ENCODE measurements at regions of chr9 and their contacts with region 1.

Region 1: DNA sequence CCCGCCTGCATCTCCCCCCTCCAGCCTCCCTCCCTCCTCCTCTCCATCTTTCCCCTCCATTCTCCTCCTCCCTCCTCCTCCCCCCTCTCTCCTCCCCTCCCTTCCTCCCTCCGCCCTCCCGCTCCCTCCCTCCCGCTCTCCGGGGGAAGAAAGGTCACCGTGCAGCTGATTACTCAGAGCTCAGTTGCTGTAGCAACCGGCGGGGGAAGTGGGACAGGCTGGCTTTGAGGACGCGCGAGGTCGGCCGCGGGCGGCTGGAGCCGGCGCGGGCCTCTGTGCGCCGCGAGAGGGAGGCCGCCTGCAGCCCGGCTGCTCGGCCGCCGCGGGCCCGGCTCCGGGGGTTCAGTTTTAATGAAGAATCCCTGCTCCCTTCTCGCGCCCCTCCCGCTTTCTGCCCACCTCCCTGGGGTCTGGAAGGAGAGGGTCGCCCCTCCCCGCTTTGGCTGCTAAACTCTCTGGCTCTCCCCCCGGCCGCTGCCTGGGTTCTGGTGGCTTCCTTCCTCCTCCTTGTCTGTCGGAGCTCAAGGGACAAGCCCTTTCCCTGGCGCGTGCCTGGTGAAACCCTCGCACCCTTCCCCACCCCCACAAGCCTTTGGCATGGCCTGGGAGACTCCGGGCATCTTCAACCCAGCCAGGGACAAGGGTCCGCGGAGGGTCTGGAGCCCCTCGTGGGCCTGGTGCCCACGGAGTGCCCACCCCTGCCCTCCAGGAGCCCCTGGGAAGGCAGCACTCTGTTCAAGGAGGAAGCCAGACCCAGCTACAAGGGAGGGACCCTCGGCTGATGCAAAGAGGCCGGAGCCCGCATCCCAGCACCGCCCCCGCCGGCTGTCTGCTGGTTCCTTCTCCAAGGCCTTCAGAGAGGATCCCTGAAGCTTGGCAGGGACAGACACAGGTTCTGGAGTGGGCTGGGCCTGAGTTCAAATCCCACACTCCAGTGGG is 160.3 kb downstream of the C9orf50 start:
- DNase-seq: peak; percentile 95 to 97 (median 96)
- H3K4me3 ChIP-seq: peak overlapping the region; percentile 13 to 61 (median 44)
- H3K4me3 Mint-ChIP-seq: peak overlapping the region; percentile 78 to 88
- H3K27ac ChIP-seq: peak overlapping the region; percentile 97 to 100
- H3K27ac Mint-ChIP-seq: peak overlapping the region; percentile 97 to 99 (median 99)
- H3K4me1 ChIP-seq: peaks cover 44 to 47% of the 10 kb centered on the region in 2 donors
- H3K4me1 Mint-ChIP-seq: peaks cover 40% of the 10 kb centered on the region
- H3K27me3 ChIP-seq: no peaks in the 10 kb centered on the region
- H3K27me3 Mint-ChIP-seq: peaks cover 5 to 9% (median 6%) of the 10 kb centered on the region in 3 donors
- CTCF ChIP-seq: no peak

Region 2: DNA sequence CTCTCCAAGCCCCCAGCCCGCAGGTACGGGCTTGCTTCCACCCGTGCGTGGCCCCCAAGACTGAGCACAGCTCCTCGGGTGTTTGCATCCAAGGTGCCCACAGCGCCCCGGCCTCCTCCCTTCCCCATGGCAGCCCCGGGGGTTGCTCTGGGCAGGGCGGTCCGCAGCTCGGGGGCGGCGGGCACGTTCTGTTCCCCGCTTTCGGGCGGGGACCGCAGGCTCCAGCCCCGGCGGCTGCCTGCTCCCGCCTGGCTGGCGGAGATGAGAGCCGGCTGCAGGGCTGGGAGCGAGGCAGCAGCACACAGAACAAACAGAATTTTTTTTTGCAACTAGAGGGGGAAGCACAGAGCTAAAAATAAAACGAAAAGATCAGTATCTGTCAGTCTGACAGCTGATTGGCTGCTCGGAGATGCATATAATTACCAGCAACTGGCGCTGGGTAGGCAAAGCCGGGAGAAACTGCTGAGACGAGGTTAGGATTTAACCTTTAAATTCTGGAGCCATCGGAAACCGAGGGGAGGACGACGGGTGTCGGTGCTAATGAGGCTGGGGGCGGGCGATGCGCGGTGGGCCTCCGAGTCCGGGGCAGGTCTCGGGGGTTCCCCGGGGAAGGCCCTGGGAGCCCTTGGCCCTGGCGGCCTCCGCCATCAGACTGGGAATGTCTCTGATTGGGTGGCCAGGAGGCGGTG is 139.9 kb before region 1 on chr9:
- intact Hi-C with region 1: loop called in 1 of 2 experiments (anchors 10 kb)
- DNase-seq: peak; percentile 77 to 90 (median 79)
- H3K4me3 ChIP-seq: peak overlapping the region; percentile 54 to 82 (median 55)
- H3K4me3 Mint-ChIP-seq: peak overlapping the region; percentile 86 to 96
- H3K27ac ChIP-seq: peak overlapping the region; percentile 49 to 94
- H3K27ac Mint-ChIP-seq: peak overlapping the region; percentile 90 to 99 (median 95)
- H3K4me1 ChIP-seq: peaks cover 34 to 52% of the 10 kb centered on the region in 2 donors
- H3K4me1 Mint-ChIP-seq: peaks cover 56% of the 10 kb centered on the region
- H3K27me3 ChIP-seq: no peaks in the 10 kb centered on the region
- H3K27me3 Mint-ChIP-seq: peaks cover 0 to 3% (median 1%) of the 10 kb centered on the region in 3 donors
- CTCF ChIP-seq: peak; percentile 43

Region 3: GRCh38 chr9:129413537-129414376 is 46.8 kb before region 1 on chr9:
- intact Hi-C with region 1: loop called in 1 of 2 experiments (anchors 2 kb)
- DNase-seq: peak; percentile 98
- H3K4me3 ChIP-seq: peak overlapping the region; percentile 31 to 68 (median 49)
- H3K4me3 Mint-ChIP-seq: peak overlapping the region; percentile 74 to 87
- H3K27ac ChIP-seq: peak overlapping the region; percentile 98
- H3K27ac Mint-ChIP-seq: peak overlapping the region; percentile 97 to 99 (median 98)
- H3K4me1 ChIP-seq: peaks cover 48 to 49% of the 10 kb centered on the region in 2 donors
- H3K4me1 Mint-ChIP-seq: peaks cover 38% of the 10 kb centered on the region
- H3K27me3 ChIP-seq: no peaks in the 10 kb centered on the region
- H3K27me3 Mint-ChIP-seq: peaks cover 1 to 2% (median 2%) of the 10 kb centered on the region in 3 donors
- CTCF ChIP-seq: no peak

Region 4: GRCh38 chr9:129422843-129423192 is 37.8 kb before region 1 on chr9:
- intact Hi-C with region 1: loop called in 1 of 2 experiments (anchors 5 kb)
- DNase-seq: peak; percentile 44 to 59 (median 54)
- H3K4me3 ChIP-seq: peak overlapping the region in 1 of 3 experiments; percentile 14
- H3K4me3 Mint-ChIP-seq: no peak overlapping the region
- H3K27ac ChIP-seq: no peak overlapping the region
- H3K27ac Mint-ChIP-seq: peak overlapping the region in 1 of 7 donors; percentile 90
- H3K4me1 ChIP-seq: peaks cover 12% of the 10 kb centered on the region in 2 donors
- H3K4me1 Mint-ChIP-seq: peaks cover 16% of the 10 kb centered on the region
- H3K27me3 ChIP-seq: no peaks in the 10 kb centered on the region
- H3K27me3 Mint-ChIP-seq: peaks cover 1 to 9% (median 4%) of the 10 kb centered on the region in 3 donors
- CTCF ChIP-seq: no peak

Region 5: GRCh38 chr9:129482521-129483414 is 22.2 kb after region 1 on chr9:
- intact Hi-C with region 1: loop called in 1 of 2 experiments (anchors 1 kb)
- DNase-seq: peak; percentile 48 to 55 (median 52)
- H3K4me3 ChIP-seq: peak overlapping the region; percentile 34 to 70 (median 38)
- H3K4me3 Mint-ChIP-seq: peak overlapping the region; percentile 75 to 85
- H3K27ac ChIP-seq: peak overlapping the region; percentile 89 to 92
- H3K27ac Mint-ChIP-seq: peak overlapping the region; percentile 84 to 95 (median 92)
- H3K4me1 ChIP-seq: peaks cover 26 to 38% of the 10 kb centered on the region in 2 donors
- H3K4me1 Mint-ChIP-seq: peaks cover 30% of the 10 kb centered on the region
- H3K27me3 ChIP-seq: no peaks in the 10 kb centered on the region
- H3K27me3 Mint-ChIP-seq: peaks cover 6 to 17% (median 9%) of the 10 kb centered on the region in 3 donors
- CTCF ChIP-seq: no peak

Region 6: GRCh38 chr9:129495534-129496325 is 35.1 kb after region 1 on chr9:
- intact Hi-C with region 1: loop called (anchors 2 to 5 kb)
- DNase-seq: peak; percentile 66 to 83 (median 76)
- H3K4me3 ChIP-seq: peak overlapping the region; percentile 66 to 96 (median 86)
- H3K4me3 Mint-ChIP-seq: peak overlapping the region; percentile 90 to 91
- H3K27ac ChIP-seq: peak overlapping the region; percentile 69 to 91
- H3K27ac Mint-ChIP-seq: peak overlapping the region; percentile 85 to 98 (median 93)
- H3K4me1 ChIP-seq: peaks cover 43 to 50% of the 10 kb centered on the region in 2 donors
- H3K4me1 Mint-ChIP-seq: peaks cover 51% of the 10 kb centered on the region
- H3K27me3 ChIP-seq: no peaks in the 10 kb centered on the region
- H3K27me3 Mint-ChIP-seq: peaks cover 2 to 13% (median 4%) of the 10 kb centered on the region in 3 donors
- CTCF ChIP-seq: no peak

Measured in CD14-positive monocyte (primary cell).